ENCODE measurements at regions of chr13 and their contacts with region 1.

Region 1: GRCh38 chr13:111474136-111475002 is 153.9 kb downstream of the TEX29 start:
- DNase-seq: no peak
- ATAC-seq: no peak
- H3K4me3 Mint-ChIP-seq: no peak overlapping the region
- H3K27ac Mint-ChIP-seq: no peak overlapping the region
- H3K4me1 Mint-ChIP-seq: no peaks in the 10 kb centered on the region
- H3K27me3 Mint-ChIP-seq: no peaks in the 10 kb centered on the region
- CTCF ChIP-seq: no peak

Region 2: DNA sequence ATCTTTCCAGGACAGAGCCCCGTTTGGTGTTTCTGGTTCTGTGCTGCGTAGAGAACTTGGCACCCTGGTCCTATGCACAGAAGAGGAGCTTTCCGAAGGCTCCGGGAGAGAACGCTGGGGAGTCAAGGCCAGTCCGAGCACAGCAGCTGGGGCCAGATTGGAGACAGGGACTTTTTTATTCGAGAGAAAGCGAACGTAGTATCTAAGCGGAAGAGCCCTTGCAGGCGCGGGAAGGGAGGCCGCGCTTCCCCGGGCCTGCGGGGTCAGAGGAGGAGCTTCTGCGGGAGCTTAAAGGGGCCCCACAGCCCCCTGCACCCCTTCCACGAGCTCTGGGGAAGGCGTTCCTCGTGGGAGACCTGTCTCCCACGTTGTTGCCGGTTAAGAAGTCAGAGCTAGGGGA is 407.8 kb before region 1 on chr13:
- CTCF ChIA-PET with region 1: no interaction called
- POLR2A ChIA-PET with region 1: no interaction called
- intact Hi-C with region 1: no loop called
- DNase-seq: no peak
- ATAC-seq: no peak
- H3K4me3 Mint-ChIP-seq: peak overlapping the region; percentile 62
- H3K27ac Mint-ChIP-seq: no peak overlapping the region
- H3K4me1 Mint-ChIP-seq: peaks cover 3% of the 10 kb centered on the region
- H3K27me3 Mint-ChIP-seq: peaks cover 36% of the 10 kb centered on the region
- CTCF ChIP-seq: no peak

Region 3: GRCh38 chr13:111516712-111517640 is 42.6 kb after region 1 on chr13:
- CTCF ChIA-PET with region 1: no interaction called
- POLR2A ChIA-PET with region 1: no interaction called
- intact Hi-C with region 1: no loop called
- DNase-seq: no peak
- ATAC-seq: no peak
- H3K4me3 Mint-ChIP-seq: no peak overlapping the region
- H3K27ac Mint-ChIP-seq: no peak overlapping the region
- H3K4me1 Mint-ChIP-seq: no peaks in the 10 kb centered on the region
- H3K27me3 Mint-ChIP-seq: peaks cover 2% of the 10 kb centered on the region
- CTCF ChIP-seq: no peak

Region 4: GRCh38 chr13:112443995-112444860 is 969.9 kb after region 1 on chr13:
- CTCF ChIA-PET with region 1: interaction called, 6 read pairs
- POLR2A ChIA-PET with region 1: interaction called, 3 read pairs
- intact Hi-C with region 1: loop called (anchors 10 kb)
- DNase-seq: peak; percentile 75
- ATAC-seq: peak; percentile 92
- H3K4me3 Mint-ChIP-seq: no peak overlapping the region
- H3K27ac Mint-ChIP-seq: no peak overlapping the region
- H3K4me1 Mint-ChIP-seq: no peaks in the 10 kb centered on the region
- H3K27me3 Mint-ChIP-seq: peaks cover 20% of the 10 kb centered on the region
- CTCF ChIP-seq: peak; percentile 87